H1 (cell line): ENCODE measurements at regions of chr15 and their contacts with region 1.

Region 1: DNA sequence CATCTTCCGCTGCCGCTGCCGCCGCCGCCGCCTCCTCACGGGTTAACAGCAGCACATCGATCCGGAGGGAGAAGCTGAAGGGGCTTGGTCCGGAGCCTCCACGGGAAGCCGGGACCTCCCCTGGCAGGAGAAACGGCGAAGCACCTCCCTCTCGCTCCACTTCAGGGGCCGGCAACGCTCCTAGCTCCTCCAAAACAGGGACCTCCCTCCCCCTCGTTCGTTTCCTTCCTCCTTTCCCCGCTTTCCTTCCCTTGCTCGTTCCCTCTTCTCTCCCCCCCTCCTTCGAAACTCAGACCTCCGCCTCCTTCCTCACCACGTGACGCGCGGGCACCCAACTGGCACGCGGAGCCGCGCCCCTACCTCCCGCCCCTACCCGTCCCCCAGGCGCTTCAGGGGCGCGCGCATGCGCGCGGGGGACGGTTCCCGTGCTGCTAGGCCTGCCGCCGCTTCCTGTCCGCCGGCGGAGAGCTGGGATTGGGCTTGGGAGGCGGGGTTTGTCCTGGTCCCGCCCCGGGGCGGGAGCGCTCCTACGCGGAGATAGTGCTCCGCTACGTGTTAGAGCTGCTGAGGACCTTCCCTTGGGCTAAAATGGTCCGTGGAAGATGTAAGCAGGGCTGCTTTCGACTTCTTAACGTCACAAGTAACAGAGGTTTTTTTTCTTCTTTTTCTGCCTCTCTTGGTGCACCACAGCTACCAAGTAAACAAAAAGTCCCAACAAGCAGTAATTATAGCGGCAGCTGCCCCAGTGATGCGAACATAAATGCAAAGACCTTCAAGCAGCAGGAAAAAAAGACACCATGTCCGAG is at the start of gene ADAM10:
- DNase-seq: peak; percentile 97 to 98
- H3K4me3 ChIP-seq: peak within 1 kb of the TSS; percentile 91 to 100 (median 97)
- H3K27ac ChIP-seq: peak within 1 kb of the TSS; percentile 92
- H3K4me1 ChIP-seq: peaks cover 0 to 4% (median 1%) of the 10 kb centered on the region in 4 experiments; a peak in 4 of 7 replicates
- H3K27me3 ChIP-seq: no peaks in the 10 kb centered on the region; a peak in 1 of 7 replicates
- CTCF ChIP-seq: peak in 1 of 3 experiments; percentile 13; a peak in 1 of 4 replicates
- EP300 ChIP-seq: no peak
- POLR2A ChIP-seq: peak; percentile 80 to 87
- RAD21 ChIP-seq: no peak
- total RNA-seq, gene ADAM10: 147 and 163 TPM in 2 replicates

Region 2: DNA sequence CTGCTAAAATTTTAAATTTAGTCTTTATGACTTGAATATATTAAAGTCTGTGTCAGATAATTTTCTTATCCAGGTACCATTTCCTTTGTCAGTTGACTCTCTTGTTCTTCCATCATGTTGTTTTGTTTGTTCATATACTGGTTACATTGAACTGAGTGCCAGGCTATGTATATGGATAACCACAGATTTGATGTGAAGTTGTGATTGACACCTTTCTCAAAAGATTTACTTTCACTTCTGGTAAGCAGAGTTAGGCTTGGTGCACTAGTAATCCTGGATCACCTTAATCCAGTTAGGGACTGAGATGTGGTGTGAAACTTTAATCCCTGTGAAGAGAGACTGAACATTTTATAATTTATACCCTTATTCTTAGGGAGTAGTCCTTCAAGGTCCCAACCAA is 99.6 kb before region 1 on chr15:
- CTCF ChIA-PET with region 1: no interaction called
- POLR2A ChIA-PET with region 1: no interaction called
- DNase-seq: no peak
- H3K4me3 ChIP-seq: no peak overlapping the region
- H3K27ac ChIP-seq: no peak overlapping the region
- H3K4me1 ChIP-seq: no peaks in the 10 kb centered on the region
- H3K27me3 ChIP-seq: no peaks in the 10 kb centered on the region
- CTCF ChIP-seq: no peak
- EP300 ChIP-seq: no peak
- POLR2A ChIP-seq: no peak
- RAD21 ChIP-seq: no peak

Region 3: DNA sequence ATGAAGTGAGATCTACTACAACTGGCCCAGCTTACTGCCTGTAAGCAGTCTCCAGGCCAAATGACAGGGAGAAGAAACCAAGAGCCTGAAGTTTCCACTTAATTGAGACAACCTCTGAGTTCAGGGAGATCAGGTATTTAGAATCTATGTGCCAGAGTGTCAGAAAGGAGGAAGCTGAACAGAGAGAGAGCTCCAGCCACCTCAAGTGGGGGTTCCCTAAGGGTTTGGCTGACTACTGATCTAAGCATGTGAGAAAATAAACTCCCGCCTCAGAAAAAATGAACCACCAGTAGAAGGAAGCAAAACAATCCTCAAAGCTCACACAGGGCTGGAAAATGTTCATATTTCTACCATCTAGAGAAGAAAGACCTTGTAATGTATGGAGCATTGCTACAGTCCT is 25.3 kb before region 1 on chr15:
- CTCF ChIA-PET with region 1: no interaction called
- POLR2A ChIA-PET with region 1: no interaction called
- DNase-seq: no peak
- H3K4me3 ChIP-seq: no peak overlapping the region
- H3K27ac ChIP-seq: no peak overlapping the region
- H3K4me1 ChIP-seq: no peaks in the 10 kb centered on the region; a peak in 3 of 7 replicates
- H3K27me3 ChIP-seq: no peaks in the 10 kb centered on the region
- CTCF ChIP-seq: no peak
- EP300 ChIP-seq: no peak
- POLR2A ChIP-seq: no peak
- RAD21 ChIP-seq: no peak

Region 4: GRCh38 chr15:58738046-58738707 is 11.6 kb before region 1 on chr15:
- CTCF ChIA-PET with region 1: no interaction called
- POLR2A ChIA-PET with region 1: interaction called, 10 read pairs
- DNase-seq: no peak
- H3K4me3 ChIP-seq: no peak overlapping the region
- H3K27ac ChIP-seq: no peak overlapping the region
- H3K4me1 ChIP-seq: peaks cover 2 to 5% (median 4%) of the 10 kb centered on the region in 4 experiments; a peak in 6 of 7 replicates
- H3K27me3 ChIP-seq: no peaks in the 10 kb centered on the region
- CTCF ChIP-seq: no peak
- EP300 ChIP-seq: no peak
- POLR2A ChIP-seq: no peak
- RAD21 ChIP-seq: no peak

Region 5: DNA sequence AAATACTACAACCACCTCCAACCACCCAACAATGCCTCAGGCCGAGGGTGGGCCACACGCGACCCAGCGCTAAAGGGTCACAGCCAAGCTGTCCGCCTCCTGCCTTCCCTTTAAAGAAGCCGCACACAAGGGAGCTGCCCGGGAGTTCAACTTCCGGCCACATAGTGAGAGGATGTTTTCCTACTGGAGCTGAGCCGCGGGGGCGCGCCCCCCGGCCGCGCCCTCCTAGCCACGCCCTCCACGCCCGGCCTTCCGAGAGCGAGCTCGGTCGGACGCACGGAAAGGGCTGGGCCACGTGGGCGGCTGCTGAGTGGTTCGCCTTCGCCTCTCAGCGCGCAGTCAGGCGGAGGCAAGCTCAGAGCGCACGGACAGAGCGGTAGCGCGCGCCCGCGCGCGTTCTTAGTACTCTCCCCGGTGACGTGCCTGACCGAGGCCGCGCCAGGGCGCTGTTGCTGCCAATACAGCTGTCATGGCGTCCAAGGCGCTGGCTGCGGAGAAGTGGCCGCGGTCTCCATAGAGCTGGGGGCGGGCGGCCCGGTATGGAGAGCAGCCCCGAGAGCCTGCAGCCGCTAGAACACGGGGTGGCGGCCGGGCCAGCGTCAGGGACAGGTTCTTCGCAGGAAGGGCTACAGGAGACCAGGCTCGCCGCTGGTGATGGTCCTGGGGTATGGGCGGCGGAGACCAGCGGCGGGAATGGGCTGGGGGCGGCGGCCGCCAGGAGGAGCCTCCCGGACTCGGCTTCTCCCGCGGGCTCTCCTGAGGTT is 21.3 kb after region 1 on chr15 and contains the start of gene MINDY2:
- CTCF ChIA-PET with region 1: interaction called, 9 read pairs
- POLR2A ChIA-PET with region 1: interaction called, 25 read pairs
- DNase-seq: peak; percentile 93 to 97
- H3K4me3 ChIP-seq: peak within 1 kb of the TSS; percentile 82 to 90 (median 87)
- H3K27ac ChIP-seq: peak within 1 kb of the TSS; percentile 81
- H3K4me1 ChIP-seq: peaks cover 0 to 2% (median 0%) of the 10 kb centered on the region in 4 experiments; a peak in 2 of 7 replicates
- H3K27me3 ChIP-seq: no peaks in the 10 kb centered on the region
- CTCF ChIP-seq: peak in 2 of 3 experiments; percentile 37 to 51; a peak in 3 of 4 replicates
- EP300 ChIP-seq: peak in 1 of 2 experiments; percentile 78; a peak in 1 of 3 replicates
- POLR2A ChIP-seq: peak in 1 of 2 experiments; percentile 12
- RAD21 ChIP-seq: 0 out of 4 replicates have a peak, but pooled peaks of 1 of the 2 experiments have one; percentile 21
- total RNA-seq, gene MINDY2: 24.4 and 25.7 TPM in 2 replicates